WTC11 (cell line): ENCODE measurements at regions of chr5 and their contacts with region 1.

Region 1: DNA sequence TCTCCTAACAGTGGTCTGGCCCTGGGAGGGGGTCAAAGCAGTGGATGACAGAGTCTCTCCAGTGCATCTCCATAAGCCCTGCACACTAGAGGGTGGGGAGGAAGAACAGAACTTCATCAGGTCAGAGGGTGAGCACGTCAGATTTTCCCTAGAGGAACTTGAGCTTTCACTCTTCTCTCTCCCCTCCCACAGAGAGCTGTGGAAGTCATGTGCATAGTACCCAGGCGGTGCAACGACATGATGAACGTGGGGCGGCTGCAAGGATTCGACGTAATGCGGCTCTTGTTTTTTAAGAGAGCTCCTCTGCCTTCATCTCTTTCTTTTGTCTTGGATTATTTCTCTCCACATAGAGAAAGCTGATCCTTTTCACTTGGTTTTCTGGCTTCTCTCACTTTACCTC is 100.2 kb upstream of the OTULINL start:
- DNase-seq: no peak
- ATAC-seq: no peak
- H3K4me3 Mint-ChIP-seq: no peak overlapping the region
- H3K27ac Mint-ChIP-seq: no peak overlapping the region
- H3K4me1 Mint-ChIP-seq: no peaks in the 10 kb centered on the region
- H3K27me3 Mint-ChIP-seq: no peaks in the 10 kb centered on the region
- CTCF ChIP-seq: no peak

Region 2: DNA sequence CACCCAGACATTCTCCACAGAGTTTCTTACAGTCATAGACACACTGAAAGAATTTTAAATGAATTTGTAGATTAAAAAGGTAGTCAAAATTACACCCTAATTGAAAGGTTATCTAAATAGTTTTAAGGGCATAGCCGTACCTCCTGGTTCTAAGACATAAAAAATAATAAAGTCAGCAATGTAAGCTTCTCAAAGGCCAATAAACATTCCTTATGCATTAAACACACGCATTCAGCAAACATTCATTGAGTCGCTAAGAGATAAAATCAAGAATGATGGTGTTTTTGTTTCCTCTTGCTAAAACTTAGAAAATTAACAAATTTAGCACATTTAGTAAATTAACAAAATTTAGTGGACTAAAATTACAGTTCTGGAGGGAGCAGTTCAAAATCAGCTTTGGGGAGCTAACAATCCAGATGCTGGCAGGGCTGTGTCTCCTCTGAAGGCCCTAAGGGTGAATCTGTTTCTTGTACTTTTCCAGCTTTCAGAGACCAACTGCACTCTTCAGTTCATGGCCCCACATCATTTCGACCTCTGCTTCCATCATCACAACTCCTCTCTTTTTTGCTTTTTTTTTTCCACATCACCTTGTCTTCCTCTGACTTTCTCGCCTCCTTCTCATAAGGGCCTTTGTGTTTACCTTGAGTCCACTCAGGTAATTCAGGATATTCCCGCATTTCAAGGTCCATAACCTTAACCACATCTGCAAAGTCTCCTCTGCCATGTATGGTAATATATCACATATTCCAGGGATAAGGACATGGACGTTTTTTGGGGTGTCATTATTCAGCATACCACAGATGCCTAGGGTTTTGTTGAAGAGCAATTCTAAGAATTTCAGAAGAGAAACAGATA is 1053.3 kb before region 1 on chr5:
- CTCF ChIA-PET with region 1: no interaction called
- POLR2A ChIA-PET with region 1: interaction called, 11 read pairs
- DNase-seq: no peak
- ATAC-seq: no peak
- H3K4me3 Mint-ChIP-seq: no peak overlapping the region
- H3K27ac Mint-ChIP-seq: no peak overlapping the region
- H3K4me1 Mint-ChIP-seq: no peaks in the 10 kb centered on the region
- H3K27me3 Mint-ChIP-seq: no peaks in the 10 kb centered on the region; the same call in 1 of the 2 replicates
- CTCF ChIP-seq: no peak

Region 3: GRCh38 chr5:14428302-14429081 is 52.9 kb before region 1 on chr5:
- CTCF ChIA-PET with region 1: no interaction called
- POLR2A ChIA-PET with region 1: no interaction called
- DNase-seq: no peak
- ATAC-seq: no peak
- H3K4me3 Mint-ChIP-seq: no peak overlapping the region
- H3K27ac Mint-ChIP-seq: no peak overlapping the region
- H3K4me1 Mint-ChIP-seq: peaks cover 44% of the 10 kb centered on the region
- H3K27me3 Mint-ChIP-seq: no peaks in the 10 kb centered on the region
- CTCF ChIP-seq: no peak

Region 4: GRCh38 chr5:14457476-14457875 is 23.9 kb before region 1 on chr5:
- CTCF ChIA-PET with region 1: no interaction called
- POLR2A ChIA-PET with region 1: no interaction called
- DNase-seq: no peak
- ATAC-seq: no peak
- H3K4me3 Mint-ChIP-seq: no peak overlapping the region
- H3K27ac Mint-ChIP-seq: peak overlapping the region; percentile 85
- H3K4me1 Mint-ChIP-seq: peaks cover 14% of the 10 kb centered on the region
- H3K27me3 Mint-ChIP-seq: peaks cover 4% of the 10 kb centered on the region; the same call in 1 of the 2 replicates
- CTCF ChIP-seq: no peak

Region 5: DNA sequence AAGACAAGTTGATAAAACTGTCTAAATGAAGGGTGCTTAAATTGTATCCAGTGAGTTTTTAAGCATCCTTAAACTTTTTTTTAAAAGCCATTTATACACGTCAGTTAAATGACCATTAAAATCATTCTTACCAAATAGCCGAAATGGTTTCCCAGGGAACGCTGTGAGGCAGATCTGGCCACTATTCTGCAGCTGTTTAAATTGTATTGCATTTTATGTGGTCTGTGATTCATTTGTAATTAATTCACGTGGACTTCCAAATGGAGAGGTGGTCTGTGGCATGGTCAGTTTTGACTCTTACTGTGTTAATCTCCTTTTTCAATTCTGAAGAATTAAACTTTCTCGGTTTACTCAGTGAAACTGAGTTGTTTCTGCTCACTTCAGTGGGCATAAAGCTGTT is 13.5 kb before region 1 on chr5:
- CTCF ChIA-PET with region 1: no interaction called
- POLR2A ChIA-PET with region 1: interaction called, 13 read pairs
- DNase-seq: no peak
- ATAC-seq: no peak
- H3K4me3 Mint-ChIP-seq: no peak overlapping the region
- H3K27ac Mint-ChIP-seq: no peak overlapping the region
- H3K4me1 Mint-ChIP-seq: peaks cover 10% of the 10 kb centered on the region
- H3K27me3 Mint-ChIP-seq: no peaks in the 10 kb centered on the region
- CTCF ChIP-seq: no peak